CD8-positive, alpha-beta T cell (primary cell): ENCODE measurements at regions of chr2 and their contacts with region 1.

Region 1: DNA sequence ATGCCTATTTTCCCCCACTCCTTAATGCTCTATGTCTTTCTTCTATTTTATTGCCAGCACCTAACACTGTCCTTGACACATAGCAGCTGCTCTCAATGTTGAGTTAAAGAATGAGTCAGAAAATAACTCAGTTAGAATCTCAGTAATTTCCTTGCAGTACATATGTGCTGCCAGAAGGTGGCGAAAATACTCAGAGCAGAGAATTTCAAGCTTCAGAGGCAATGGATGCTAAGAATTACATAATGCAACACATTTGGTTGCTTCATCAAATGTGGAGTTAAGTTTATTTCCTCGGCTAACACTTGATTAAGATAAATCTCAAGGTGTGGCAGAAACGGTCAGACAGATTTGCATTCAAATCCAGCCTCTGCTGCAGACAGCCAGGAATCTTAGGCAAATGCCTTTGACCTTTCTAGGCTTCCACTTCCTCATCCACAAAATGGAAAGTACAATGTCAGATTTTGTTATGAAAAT is 105.6 kb downstream of the VSNL1 start:
- DNase-seq: peak in 6 of 9 experiments; percentile 8 to 55 (median 32)
- ATAC-seq: peak; percentile 49
- H3K4me3 ChIP-seq: no peak overlapping the region
- H3K4me3 Mint-ChIP-seq: no peak overlapping the region
- H3K27ac ChIP-seq: no peak overlapping the region
- H3K27ac Mint-ChIP-seq: no peak overlapping the region
- H3K4me1 ChIP-seq: no peaks in the 10 kb centered on the region
- H3K4me1 Mint-ChIP-seq: peaks cover 2% of the 10 kb centered on the region
- H3K27me3 ChIP-seq: no peaks in the 10 kb centered on the region
- H3K27me3 Mint-ChIP-seq: no peaks in the 10 kb centered on the region
- CTCF ChIP-seq: peak; percentile 90

Region 2: DNA sequence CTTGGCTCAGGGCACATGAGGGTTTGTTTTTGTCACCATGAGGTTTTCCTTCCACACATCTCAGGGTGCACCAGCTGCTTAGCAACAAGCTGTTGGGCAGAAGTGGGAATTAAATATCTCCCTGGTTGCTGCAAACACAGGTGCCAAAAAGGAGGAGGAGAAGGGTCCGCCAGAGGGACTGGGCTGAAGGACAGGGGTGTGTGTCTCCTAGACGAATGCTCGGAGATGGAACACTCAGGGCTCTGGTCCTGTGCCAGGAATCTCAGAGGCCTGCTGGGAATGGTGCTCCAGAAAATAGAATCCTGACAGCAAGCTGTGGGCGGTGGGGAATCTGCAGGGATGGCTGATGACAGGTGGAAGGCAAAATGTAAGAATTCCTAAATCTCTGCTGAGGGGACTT is 11.1 kb before region 1 on chr2:
- CTCF ChIA-PET with region 1: interaction called, 13 read pairs
- POLR2A ChIA-PET with region 1: no interaction called
- intact Hi-C with region 1: no loop called
- DNase-seq: no peak
- ATAC-seq: no peak
- H3K4me3 ChIP-seq: no peak overlapping the region
- H3K4me3 Mint-ChIP-seq: no peak overlapping the region
- H3K27ac ChIP-seq: no peak overlapping the region
- H3K27ac Mint-ChIP-seq: no peak overlapping the region
- H3K4me1 ChIP-seq: no peaks in the 10 kb centered on the region
- H3K4me1 Mint-ChIP-seq: no peaks in the 10 kb centered on the region
- H3K27me3 ChIP-seq: no peaks in the 10 kb centered on the region
- H3K27me3 Mint-ChIP-seq: no peaks in the 10 kb centered on the region
- CTCF ChIP-seq: no peak

Region 3: DNA sequence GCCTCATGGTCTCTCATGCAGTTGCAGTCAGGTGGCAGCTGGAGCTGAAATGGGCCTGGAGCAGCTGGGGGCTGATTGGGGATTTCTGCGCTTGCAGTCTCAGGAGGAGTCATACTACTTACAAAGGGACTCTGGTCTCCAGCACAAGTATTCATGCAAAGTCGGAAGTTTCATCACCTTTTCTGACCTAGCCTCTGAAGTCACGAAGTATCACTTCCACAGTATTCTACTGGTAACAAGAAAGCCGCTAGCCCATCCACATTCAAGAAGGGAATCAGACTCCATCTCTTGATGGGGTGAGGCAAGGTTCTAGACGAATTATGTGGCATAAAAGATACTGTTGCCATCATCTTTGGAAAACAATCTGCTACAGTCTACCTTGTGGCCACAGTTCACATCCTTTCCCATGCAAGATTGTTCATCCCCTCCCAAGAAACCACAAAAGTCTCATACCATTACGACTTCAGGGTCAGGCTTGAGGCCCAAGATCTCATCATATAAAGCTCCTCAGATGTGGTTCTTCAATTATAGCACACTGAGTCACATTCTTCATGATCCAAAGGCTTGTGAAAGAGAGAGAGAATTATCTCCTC is 12.2 kb after region 1 on chr2:
- CTCF ChIA-PET with region 1: interaction called, 17 read pairs
- POLR2A ChIA-PET with region 1: no interaction called
- intact Hi-C with region 1: no loop called
- DNase-seq: no peak
- ATAC-seq: no peak
- H3K4me3 ChIP-seq: no peak overlapping the region
- H3K4me3 Mint-ChIP-seq: no peak overlapping the region
- H3K27ac ChIP-seq: no peak overlapping the region
- H3K27ac Mint-ChIP-seq: no peak overlapping the region
- H3K4me1 ChIP-seq: no peaks in the 10 kb centered on the region
- H3K4me1 Mint-ChIP-seq: no peaks in the 10 kb centered on the region
- H3K27me3 ChIP-seq: no peaks in the 10 kb centered on the region
- H3K27me3 Mint-ChIP-seq: no peaks in the 10 kb centered on the region
- CTCF ChIP-seq: no peak

Region 4: DNA sequence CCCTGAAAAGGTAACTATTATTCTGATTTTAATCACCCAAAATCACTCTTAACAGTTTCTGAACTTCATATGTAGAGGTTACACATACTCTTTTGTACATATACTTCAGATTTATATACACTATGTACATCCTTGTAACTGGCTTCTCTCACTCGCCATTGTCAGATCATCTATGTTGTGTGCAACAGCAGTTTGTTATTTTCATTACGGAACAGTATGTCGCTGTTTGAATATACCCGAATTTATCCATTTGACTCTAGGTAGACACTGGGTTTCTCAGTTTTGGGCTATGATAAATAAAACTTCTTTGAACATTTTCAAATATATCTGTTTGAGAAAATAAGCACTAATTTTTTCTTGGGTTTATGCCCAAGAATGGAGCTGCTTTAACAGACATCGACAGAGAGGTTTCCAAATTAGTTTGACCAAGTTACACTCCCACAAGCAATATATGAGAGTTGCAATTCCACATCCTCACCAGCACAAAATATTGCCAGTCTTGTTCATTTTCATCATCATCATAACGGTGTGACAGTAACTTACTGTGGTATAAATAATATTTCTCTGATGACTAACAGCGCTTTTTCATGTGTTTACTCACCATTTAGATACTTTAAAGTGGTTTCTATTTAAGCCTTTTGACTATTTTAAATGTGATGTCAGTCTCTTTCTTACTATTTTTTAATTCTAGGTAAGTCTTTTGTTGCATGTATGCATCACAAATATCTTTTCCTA is 26.6 kb after region 1 on chr2:
- CTCF ChIA-PET with region 1: interaction called, 63 read pairs
- POLR2A ChIA-PET with region 1: no interaction called
- intact Hi-C with region 1: loop called (anchors 1 to 2 kb)
- DNase-seq: no peak
- ATAC-seq: no peak
- H3K4me3 ChIP-seq: no peak overlapping the region
- H3K4me3 Mint-ChIP-seq: no peak overlapping the region
- H3K27ac ChIP-seq: no peak overlapping the region
- H3K27ac Mint-ChIP-seq: no peak overlapping the region
- H3K4me1 ChIP-seq: no peaks in the 10 kb centered on the region
- H3K4me1 Mint-ChIP-seq: no peaks in the 10 kb centered on the region
- H3K27me3 ChIP-seq: no peaks in the 10 kb centered on the region
- H3K27me3 Mint-ChIP-seq: no peaks in the 10 kb centered on the region
- CTCF ChIP-seq: no peak

Region 5: GRCh38 chr2:18378020-18378653 is 732.0 kb after region 1 on chr2:
- CTCF ChIA-PET with region 1: interaction called, 3 read pairs
- POLR2A ChIA-PET with region 1: no interaction called
- intact Hi-C with region 1: loop called in 1 of 2 experiments (anchors 2 kb)
- DNase-seq: peak in 7 of 9 experiments; percentile 4 to 41 (median 23)
- ATAC-seq: no peak
- H3K4me3 ChIP-seq: no peak overlapping the region
- H3K4me3 Mint-ChIP-seq: no peak overlapping the region
- H3K27ac ChIP-seq: no peak overlapping the region
- H3K27ac Mint-ChIP-seq: no peak overlapping the region
- H3K4me1 ChIP-seq: no peaks in the 10 kb centered on the region
- H3K4me1 Mint-ChIP-seq: no peaks in the 10 kb centered on the region
- H3K27me3 ChIP-seq: no peaks in the 10 kb centered on the region
- H3K27me3 Mint-ChIP-seq: peaks cover 17% of the 10 kb centered on the region
- CTCF ChIP-seq: peak; percentile 79

Region 6: GRCh38 chr2:18991177-18992168 is 1345.4 kb after region 1 on chr2:
- CTCF ChIA-PET with region 1: no interaction called
- POLR2A ChIA-PET with region 1: no interaction called
- intact Hi-C with region 1: no loop called
- DNase-seq: no peak
- ATAC-seq: no peak
- H3K4me3 ChIP-seq: no peak overlapping the region
- H3K4me3 Mint-ChIP-seq: no peak overlapping the region
- H3K27ac ChIP-seq: no peak overlapping the region
- H3K27ac Mint-ChIP-seq: no peak overlapping the region
- H3K4me1 ChIP-seq: no peaks in the 10 kb centered on the region
- H3K4me1 Mint-ChIP-seq: no peaks in the 10 kb centered on the region
- H3K27me3 ChIP-seq: no peaks in the 10 kb centered on the region
- H3K27me3 Mint-ChIP-seq: no peaks in the 10 kb centered on the region
- CTCF ChIP-seq: no peak